GM10248 (cell line): ENCODE measurements at regions of chr12 and their contacts with region 1.

Region 1: GRCh38 chr12:54300732-54301427 is at the start of gene NFE2:
- DNase-seq: no peak
- CTCF ChIP-seq: no peak

Region 2: GRCh38 chr12:54359033-54359761 is 58.3 kb after region 1 on chr12:
- CTCF ChIA-PET with region 1: interaction called, 69 read pairs
- POLR2A ChIA-PET with region 1: no interaction called
- DNase-seq: peak; percentile 97
- CTCF ChIP-seq: no peak